Naive thymus-derived CD4-positive, alpha-beta T cell (primary cell): ENCODE measurements at regions of chr12 and their contacts with region 1.

Region 1: GRCh38 chr12:46459861-46460545 is 87.4 kb upstream of the SLC38A2 start:
- DNase-seq: peak in 4 of 9 donors; percentile 10 to 38 (median 26)
- ATAC-seq: peak; percentile 63
- H3K4me3 ChIP-seq: peak overlapping the region; percentile 47
- H3K4me3 Mint-ChIP-seq: peak overlapping the region; percentile 74 to 95 (median 88)
- H3K27ac ChIP-seq: peak overlapping the region; percentile 42
- H3K27ac Mint-ChIP-seq: peak overlapping the region; percentile 86 to 99 (median 96)
- H3K4me1 ChIP-seq: peaks cover 26 to 56% of the 10 kb centered on the region in 2 donors
- H3K4me1 Mint-ChIP-seq: peaks cover 45 to 67% (median 61%) of the 10 kb centered on the region in 7 donors
- H3K27me3 ChIP-seq: no peaks in the 10 kb centered on the region
- H3K27me3 Mint-ChIP-seq: no peaks in the 10 kb centered on the region

Region 2: GRCh38 chr12:46357438-46358324 is 102.3 kb before region 1 on chr12:
- CTCF ChIA-PET with region 1: no interaction called
- POLR2A ChIA-PET with region 1: no interaction called
- intact Hi-C with region 1: no loop called
- DNase-seq: no peak
- ATAC-seq: peak; percentile 36
- H3K4me3 ChIP-seq: no peak overlapping the region
- H3K4me3 Mint-ChIP-seq: no peak overlapping the region
- H3K27ac ChIP-seq: no peak overlapping the region
- H3K27ac Mint-ChIP-seq: peak overlapping the region in 5 of 9 donors; percentile 1 to 82 (median 29)
- H3K4me1 ChIP-seq: peaks cover 0 to 4% of the 10 kb centered on the region in 2 donors
- H3K4me1 Mint-ChIP-seq: peaks cover 18 to 54% (median 33%) of the 10 kb centered on the region in 7 donors
- H3K27me3 ChIP-seq: no peaks in the 10 kb centered on the region
- H3K27me3 Mint-ChIP-seq: no peaks in the 10 kb centered on the region

Region 3: DNA sequence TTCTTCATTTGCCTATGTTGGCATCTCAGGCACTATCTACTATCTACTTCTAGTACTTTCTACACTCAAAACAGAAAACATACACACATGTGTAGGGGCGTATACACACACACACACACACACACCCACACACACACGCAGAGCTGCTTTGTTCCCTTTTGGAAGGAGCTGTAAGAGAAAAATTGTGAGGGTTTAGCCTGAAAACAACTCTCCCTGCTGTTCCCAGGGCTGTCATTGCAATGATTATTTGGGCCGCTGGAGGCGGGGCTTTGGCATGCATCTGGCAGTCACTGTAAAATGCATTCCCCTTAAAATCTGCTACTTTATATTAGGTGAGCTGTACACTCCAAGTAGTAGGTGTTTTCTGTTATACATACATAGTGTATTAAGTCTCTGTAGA is 58.3 kb before region 1 on chr12:
- CTCF ChIA-PET with region 1: no interaction called
- POLR2A ChIA-PET with region 1: no interaction called
- intact Hi-C with region 1: loop called in 1 of 2 experiments (anchors 5 kb)
- DNase-seq: no peak
- ATAC-seq: no peak
- H3K4me3 ChIP-seq: no peak overlapping the region
- H3K4me3 Mint-ChIP-seq: no peak overlapping the region
- H3K27ac ChIP-seq: no peak overlapping the region
- H3K27ac Mint-ChIP-seq: peak overlapping the region in 1 of 9 donors; percentile 32
- H3K4me1 ChIP-seq: peaks cover 0 to 11% of the 10 kb centered on the region in 2 donors
- H3K4me1 Mint-ChIP-seq: peaks cover 28 to 76% (median 67%) of the 10 kb centered on the region in 7 donors
- H3K27me3 ChIP-seq: no peaks in the 10 kb centered on the region
- H3K27me3 Mint-ChIP-seq: no peaks in the 10 kb centered on the region

Region 4: GRCh38 chr12:46430340-46430948 is 29.6 kb before region 1 on chr12:
- CTCF ChIA-PET with region 1: no interaction called
- POLR2A ChIA-PET with region 1: no interaction called
- intact Hi-C with region 1: loop called in 1 of 2 experiments (anchors 2 kb)
- DNase-seq: peak in 4 of 9 donors; percentile 5 to 44 (median 28)
- ATAC-seq: peak; percentile 60
- H3K4me3 ChIP-seq: no peak overlapping the region
- H3K4me3 Mint-ChIP-seq: peak overlapping the region in 3 of 10 donors; percentile 36 to 70 (median 69)
- H3K27ac ChIP-seq: no peak overlapping the region
- H3K27ac Mint-ChIP-seq: peak overlapping the region in 8 of 9 donors; percentile 19 to 91 (median 75)
- H3K4me1 ChIP-seq: peaks cover 0 to 4% of the 10 kb centered on the region in 2 donors
- H3K4me1 Mint-ChIP-seq: peaks cover 1 to 28% (median 16%) of the 10 kb centered on the region in 7 donors
- H3K27me3 ChIP-seq: no peaks in the 10 kb centered on the region
- H3K27me3 Mint-ChIP-seq: no peaks in the 10 kb centered on the region

Region 5: DNA sequence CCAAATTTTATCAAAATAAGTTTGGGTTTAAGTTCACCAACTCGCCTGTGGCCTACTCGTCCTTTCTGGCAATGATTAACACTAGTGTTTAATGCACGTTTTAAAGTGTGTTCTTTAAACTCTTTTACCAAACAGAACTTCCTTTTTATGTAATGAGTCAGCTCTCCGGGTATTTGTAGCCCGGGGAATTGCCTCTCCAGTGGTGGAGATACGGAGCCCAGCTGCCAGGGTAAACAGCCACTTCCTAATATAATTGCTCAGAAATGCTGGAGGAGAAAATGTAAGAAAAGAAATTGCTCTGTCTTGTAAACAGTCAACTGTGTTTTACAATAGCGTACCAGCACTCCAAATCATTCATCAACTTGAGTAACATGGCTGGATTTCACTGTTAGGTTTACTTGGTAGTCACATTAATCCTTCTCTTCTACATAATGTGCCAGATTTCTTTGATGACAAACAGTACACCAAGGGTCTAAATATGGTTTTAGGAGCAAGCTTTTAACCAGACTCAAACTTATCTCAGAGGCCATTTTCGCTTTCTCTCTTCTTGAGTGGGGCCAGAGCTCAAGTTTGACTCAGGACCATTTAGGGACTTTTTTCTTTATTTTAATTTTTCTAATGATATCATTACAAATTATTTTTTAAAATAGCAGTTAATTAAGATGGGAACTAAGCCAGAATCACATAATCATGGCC is 13.8 kb after region 1 on chr12:
- CTCF ChIA-PET with region 1: no interaction called
- POLR2A ChIA-PET with region 1: interaction called, 8 read pairs
- intact Hi-C with region 1: loop called (anchors 1 kb)
- DNase-seq: no peak
- ATAC-seq: peak; percentile 76
- H3K4me3 ChIP-seq: no peak overlapping the region
- H3K4me3 Mint-ChIP-seq: peak overlapping the region in 6 of 10 donors; percentile 4 to 48 (median 25)
- H3K27ac ChIP-seq: peak overlapping the region; percentile 11
- H3K27ac Mint-ChIP-seq: peak overlapping the region in 3 of 9 donors; percentile 66 to 69 (median 68)
- H3K4me1 ChIP-seq: peaks cover 0 to 15% of the 10 kb centered on the region in 2 donors
- H3K4me1 Mint-ChIP-seq: peaks cover 15 to 50% (median 22%) of the 10 kb centered on the region in 7 donors
- H3K27me3 ChIP-seq: no peaks in the 10 kb centered on the region
- H3K27me3 Mint-ChIP-seq: no peaks in the 10 kb centered on the region

Region 6: GRCh38 chr12:46483572-46484395 is 23.8 kb after region 1 on chr12:
- CTCF ChIA-PET with region 1: no interaction called
- POLR2A ChIA-PET with region 1: no interaction called
- intact Hi-C with region 1: no loop called
- DNase-seq: no peak
- ATAC-seq: no peak
- H3K4me3 ChIP-seq: no peak overlapping the region
- H3K4me3 Mint-ChIP-seq: no peak overlapping the region
- H3K27ac ChIP-seq: no peak overlapping the region
- H3K27ac Mint-ChIP-seq: no peak overlapping the region
- H3K4me1 ChIP-seq: no peaks in the 10 kb centered on the region
- H3K4me1 Mint-ChIP-seq: peaks cover 0 to 7% (median 0%) of the 10 kb centered on the region in 7 donors
- H3K27me3 ChIP-seq: no peaks in the 10 kb centered on the region
- H3K27me3 Mint-ChIP-seq: no peaks in the 10 kb centered on the region

Region 7: GRCh38 chr12:46517579-46517962 is 57.6 kb after region 1 on chr12:
- CTCF ChIA-PET with region 1: no interaction called
- POLR2A ChIA-PET with region 1: interaction called, 5 read pairs
- intact Hi-C with region 1: loop called (anchors 1 to 5 kb)
- DNase-seq: no peak
- ATAC-seq: no peak
- H3K4me3 ChIP-seq: no peak overlapping the region
- H3K4me3 Mint-ChIP-seq: peak overlapping the region in 9 of 10 donors; percentile 35 to 82 (median 65)
- H3K27ac ChIP-seq: no peak overlapping the region
- H3K27ac Mint-ChIP-seq: peak overlapping the region; percentile 2 to 93 (median 80)
- H3K4me1 ChIP-seq: peaks cover 0 to 27% of the 10 kb centered on the region in 2 donors
- H3K4me1 Mint-ChIP-seq: peaks cover 28 to 77% (median 62%) of the 10 kb centered on the region in 7 donors
- H3K27me3 ChIP-seq: no peaks in the 10 kb centered on the region
- H3K27me3 Mint-ChIP-seq: no peaks in the 10 kb centered on the region

Region 8: DNA sequence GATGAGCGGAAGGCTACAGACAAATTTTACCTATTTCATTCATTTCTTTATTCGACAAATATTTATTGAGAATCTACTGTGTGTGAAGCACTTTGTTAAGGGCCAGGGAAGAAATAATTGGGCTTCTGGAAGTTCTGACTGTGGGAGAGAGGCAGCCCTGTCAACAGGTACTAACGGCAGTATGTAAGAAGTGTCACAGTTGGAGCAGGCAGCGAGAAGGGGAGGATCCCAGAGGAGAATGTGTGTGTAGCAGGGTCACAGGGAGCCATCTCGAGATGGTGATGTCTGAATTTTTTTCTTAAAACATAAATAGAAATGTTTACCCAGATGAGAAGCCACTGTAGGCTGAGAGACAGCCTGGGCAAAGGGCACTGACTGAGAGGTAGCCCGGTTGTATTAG is 75.9 kb after region 1 on chr12:
- CTCF ChIA-PET with region 1: no interaction called
- POLR2A ChIA-PET with region 1: no interaction called
- intact Hi-C with region 1: no loop called
- DNase-seq: no peak
- ATAC-seq: no peak
- H3K4me3 ChIP-seq: no peak overlapping the region
- H3K4me3 Mint-ChIP-seq: no peak overlapping the region
- H3K27ac ChIP-seq: no peak overlapping the region
- H3K27ac Mint-ChIP-seq: peak overlapping the region in 1 of 9 donors; percentile 36
- H3K4me1 ChIP-seq: no peaks in the 10 kb centered on the region
- H3K4me1 Mint-ChIP-seq: peaks cover 0 to 13% (median 10%) of the 10 kb centered on the region in 7 donors
- H3K27me3 ChIP-seq: no peaks in the 10 kb centered on the region
- H3K27me3 Mint-ChIP-seq: no peaks in the 10 kb centered on the region

Region 9: DNA sequence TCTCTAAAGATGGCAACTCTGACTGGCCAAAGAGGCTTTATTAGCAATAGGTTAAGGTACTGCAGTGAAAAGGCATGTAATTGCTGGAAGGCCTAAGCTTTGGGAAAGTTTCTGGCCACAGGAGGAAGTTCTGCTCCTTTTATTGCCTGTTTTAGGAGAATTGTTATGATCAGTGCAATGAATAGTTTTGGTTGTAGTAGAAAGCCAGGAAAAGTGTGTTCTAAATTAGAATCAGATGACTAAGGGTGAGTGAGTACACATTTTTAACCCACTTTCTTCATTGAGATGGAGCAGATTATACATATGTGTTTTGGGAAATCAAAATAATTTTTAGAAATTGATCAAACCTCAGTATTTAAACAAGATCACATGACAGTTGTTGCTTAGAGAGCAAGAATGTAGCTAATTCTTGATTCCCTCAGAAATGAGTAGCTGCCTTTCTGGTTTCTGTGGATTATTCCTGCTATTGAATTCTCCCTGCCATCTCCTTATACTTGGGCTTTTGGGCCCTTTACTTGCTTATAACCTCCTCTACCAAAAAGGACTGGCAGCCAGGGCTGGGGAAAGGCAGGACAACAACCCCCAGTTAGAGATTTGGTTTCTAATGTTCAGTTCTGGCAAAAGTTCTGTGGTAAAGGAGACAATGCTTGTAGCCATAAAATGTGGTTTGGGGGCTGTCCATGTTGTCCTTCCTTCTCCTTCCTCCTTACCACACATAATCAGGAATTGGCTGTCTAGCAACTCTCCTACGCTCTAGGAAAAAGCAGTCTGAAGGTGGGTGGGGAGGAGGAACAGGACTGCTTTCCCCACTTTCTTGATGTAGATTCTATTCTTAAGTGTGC is 148.6 kb after region 1 on chr12:
- CTCF ChIA-PET with region 1: no interaction called
- POLR2A ChIA-PET with region 1: no interaction called
- intact Hi-C with region 1: loop called (anchors 5 kb)
- DNase-seq: no peak
- ATAC-seq: no peak
- H3K4me3 ChIP-seq: no peak overlapping the region
- H3K4me3 Mint-ChIP-seq: peak overlapping the region; percentile 66 to 86 (median 74)
- H3K27ac ChIP-seq: no peak overlapping the region
- H3K27ac Mint-ChIP-seq: peak overlapping the region; percentile 60 to 93 (median 83)
- H3K4me1 ChIP-seq: peaks cover 21 to 27% of the 10 kb centered on the region in 2 donors
- H3K4me1 Mint-ChIP-seq: peaks cover 27 to 61% (median 59%) of the 10 kb centered on the region in 7 donors
- H3K27me3 ChIP-seq: no peaks in the 10 kb centered on the region
- H3K27me3 Mint-ChIP-seq: no peaks in the 10 kb centered on the region